ENCODE measurements at regions of chr6 and their contacts with region 1.

Region 1: GRCh38 chr6:79461205-79461604 is 76.0 kb downstream of the LCA5 start:
- DNase-seq: no peak
- H3K4me3 ChIP-seq: no peak overlapping the region
- H3K27ac ChIP-seq: no peak overlapping the region
- H3K4me1 ChIP-seq: peaks cover 18% of the 10 kb centered on the region
- H3K27me3 ChIP-seq: no peaks in the 10 kb centered on the region
- CTCF ChIP-seq: no peak

Region 2: GRCh38 chr6:78781001-78781400 is 680.2 kb before region 1 on chr6:
- CTCF ChIA-PET with region 1: no interaction called
- POLR2A ChIA-PET with region 1: no interaction called
- intact Hi-C with region 1: no loop called
- DNase-seq: peak in 1 of 2 experiments; percentile 9
- H3K4me3 ChIP-seq: no peak overlapping the region
- H3K27ac ChIP-seq: no peak overlapping the region
- H3K4me1 ChIP-seq: no peaks in the 10 kb centered on the region
- H3K27me3 ChIP-seq: no peaks in the 10 kb centered on the region
- CTCF ChIP-seq: no peak

Region 3: DNA sequence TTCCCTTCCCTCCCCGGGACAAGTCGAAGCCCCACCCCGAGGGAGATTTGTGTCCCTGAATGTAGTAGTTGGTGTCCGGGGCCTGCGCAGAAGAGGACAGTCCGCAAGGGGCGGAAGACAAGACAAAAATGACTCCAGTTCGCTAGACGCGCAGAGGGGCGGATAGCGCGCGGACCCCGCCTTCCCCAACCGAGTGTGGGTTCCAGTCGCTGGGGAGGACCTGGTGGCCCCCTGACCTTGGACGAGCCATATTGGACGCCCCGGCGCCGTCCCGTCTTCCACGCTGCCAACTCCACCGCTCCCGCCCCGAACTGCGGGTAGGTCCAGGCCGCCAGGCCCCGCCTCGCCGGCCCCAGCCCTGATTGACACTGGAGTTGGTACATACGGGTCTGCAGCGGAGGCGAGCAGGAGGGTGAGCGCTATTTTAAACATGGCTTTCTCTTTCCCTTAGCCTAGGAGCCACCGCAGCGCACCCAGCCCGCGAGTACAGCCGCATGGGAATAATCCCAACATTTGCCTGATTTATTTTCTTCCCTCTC is 227.5 kb before region 1 on chr6:
- CTCF ChIA-PET with region 1: no interaction called
- POLR2A ChIA-PET with region 1: no interaction called
- intact Hi-C with region 1: loop called (anchors 1 kb)
- DNase-seq: peak; percentile 66 to 80
- H3K4me3 ChIP-seq: peak overlapping the region; percentile 92
- H3K27ac ChIP-seq: peak overlapping the region; percentile 6; the same call in 1 of the 2 replicates
- H3K4me1 ChIP-seq: peaks cover 10% of the 10 kb centered on the region
- H3K27me3 ChIP-seq: no peaks in the 10 kb centered on the region
- CTCF ChIP-seq: 0 out of 2 replicates have a peak, but pooled peaks have one; percentile 25

Region 4: GRCh38 chr6:79506251-79506650 is 45.0 kb after region 1 on chr6:
- CTCF ChIA-PET with region 1: no interaction called
- POLR2A ChIA-PET with region 1: no interaction called
- intact Hi-C with region 1: no loop called
- DNase-seq: no peak
- H3K4me3 ChIP-seq: no peak overlapping the region
- H3K27ac ChIP-seq: no peak overlapping the region
- H3K4me1 ChIP-seq: no peaks in the 10 kb centered on the region
- H3K27me3 ChIP-seq: no peaks in the 10 kb centered on the region
- CTCF ChIP-seq: no peak

Measured in PC-9 (cell line).